ENCODE measurements at regions of chr4 and their contacts with region 1.

Region 1: DNA sequence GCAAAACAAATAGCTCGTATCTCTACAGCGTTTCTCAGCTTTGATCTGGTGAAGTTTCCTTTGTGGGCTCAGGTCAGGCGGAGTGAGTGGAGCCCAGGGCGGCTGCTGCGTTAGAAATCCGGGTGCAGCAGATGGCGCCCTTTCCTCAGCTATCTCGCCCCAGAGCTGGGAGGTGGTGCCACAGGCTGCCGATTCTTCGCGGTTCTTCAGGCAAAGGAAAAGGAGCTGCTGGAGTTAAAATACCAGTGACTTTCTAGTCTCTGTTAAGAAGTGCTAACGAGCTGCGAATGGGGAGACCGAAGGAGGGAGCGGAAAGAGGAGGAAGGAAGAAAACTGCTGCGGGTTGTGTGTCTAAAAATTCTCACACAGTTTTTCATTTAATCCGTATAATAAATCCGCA is 114.6 kb downstream of the CPE start:
- DNase-seq: peak; percentile 78
- ATAC-seq: peak; percentile 85

Region 2: GRCh38 chr4:165563851-165564250 is 70.5 kb after region 1 on chr4:
- intact Hi-C with region 1: no loop called
- DNase-seq: no peak
- ATAC-seq: no peak

Region 3: GRCh38 chr4:165814256-165815010 is 321.1 kb after region 1 on chr4:
- intact Hi-C with region 1: no loop called
- DNase-seq: no peak
- ATAC-seq: no peak

Region 4: GRCh38 chr4:166091912-166092510 is 598.7 kb after region 1 on chr4:
- intact Hi-C with region 1: loop called (anchors 1 kb)
- DNase-seq: no peak
- ATAC-seq: no peak